Mammary epithelial cell (primary cell): ENCODE measurements at regions of chr6 and their contacts with region 1.

Region 1: DNA sequence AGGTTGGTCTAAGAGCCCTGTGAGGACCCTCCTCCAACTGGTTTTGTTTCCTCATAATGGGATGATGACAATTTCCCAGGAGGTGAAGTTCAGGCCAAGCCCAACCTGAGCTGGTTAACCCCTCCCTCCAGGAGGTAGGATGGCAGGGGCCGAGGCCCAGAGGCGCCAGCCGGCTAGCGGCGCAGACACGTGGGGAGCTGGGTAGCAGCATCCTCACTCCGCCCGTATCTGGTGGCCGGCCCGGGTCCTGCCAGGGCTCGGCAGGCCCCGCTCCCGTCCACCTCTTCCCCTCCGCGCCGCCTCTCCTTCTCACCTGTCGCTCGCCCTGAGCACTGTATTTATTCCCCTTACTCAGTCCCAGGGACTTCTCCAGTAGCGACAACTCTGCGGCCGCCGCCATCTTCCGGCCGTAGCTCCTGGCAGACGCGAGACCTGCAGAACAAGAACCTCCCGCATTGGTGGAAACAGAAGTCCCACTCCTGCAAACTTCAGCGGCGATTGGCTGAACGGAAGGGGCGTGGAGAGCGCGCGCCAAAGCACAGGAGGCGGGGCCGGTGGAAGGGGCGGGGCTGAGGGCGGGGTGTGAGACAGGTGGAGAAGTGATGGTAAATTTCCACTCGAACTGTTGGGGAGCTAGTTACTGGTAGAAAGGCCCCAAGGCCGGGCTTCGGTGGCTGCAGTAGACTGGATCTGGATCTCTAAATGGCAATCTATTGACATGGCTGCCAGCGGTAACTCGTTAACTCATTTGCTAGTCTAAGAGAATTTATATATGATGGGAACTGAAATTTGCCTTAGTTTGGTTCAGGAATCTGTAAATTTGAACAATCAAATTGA is at the start of gene EEF1E1:
- DNase-seq: peak; percentile 95
- H3K4me3 ChIP-seq: peak within 1 kb of the TSS; percentile 68 to 81 (median 77)
- H3K27ac ChIP-seq: peak within 1 kb of the TSS; percentile 54
- H3K4me1 ChIP-seq: peaks cover 10% of the 10 kb centered on the region
- H3K27me3 ChIP-seq: no peaks in the 10 kb centered on the region
- CTCF ChIP-seq: peak in 1 of 2 donors; percentile 0
- total RNA-seq, gene EEF1E1: 20.2 to 39.6 TPM

Region 2: GRCh38 chr6:8085053-8085511 is 17.3 kb before region 1 on chr6:
- CTCF ChIA-PET with region 1: interaction called, 3 read pairs
- dilution Hi-C with region 1: no loop called
- in situ Hi-C with region 1: no loop called
- intact Hi-C with region 1: loop called (anchors 1 kb)
- DNase-seq: peak; percentile 93
- H3K4me3 ChIP-seq: no peak overlapping the region
- H3K27ac ChIP-seq: peak overlapping the region; percentile 60
- H3K4me1 ChIP-seq: peaks cover 38% of the 10 kb centered on the region
- H3K27me3 ChIP-seq: no peaks in the 10 kb centered on the region
- CTCF ChIP-seq: no peak